Endothelial cell of umbilical vein (primary cell): ENCODE measurements at regions of chr2 and their contacts with region 1.

Region 1: GRCh38 chr2:27628767-27629709 is at the starts of genes CCDC121 and GPN1:
- DNase-seq: peak; percentile 93
- H3K4me3 ChIP-seq: peak within 1 kb of the TSS; percentile 98
- H3K27ac ChIP-seq: peak within 1 kb of the TSS; percentile 69
- H3K4me1 ChIP-seq: peaks cover 27% of the 10 kb centered on the region
- H3K27me3 ChIP-seq: no peaks in the 10 kb centered on the region
- CTCF ChIP-seq: no peak
- POLR2A ChIP-seq: peak; percentile 96
- total RNA-seq, gene CCDC121: 1.7 and 3.3 TPM in 2 replicates
- total RNA-seq, gene GPN1: 41.5 and 45.5 TPM in 2 replicates

Region 2: DNA sequence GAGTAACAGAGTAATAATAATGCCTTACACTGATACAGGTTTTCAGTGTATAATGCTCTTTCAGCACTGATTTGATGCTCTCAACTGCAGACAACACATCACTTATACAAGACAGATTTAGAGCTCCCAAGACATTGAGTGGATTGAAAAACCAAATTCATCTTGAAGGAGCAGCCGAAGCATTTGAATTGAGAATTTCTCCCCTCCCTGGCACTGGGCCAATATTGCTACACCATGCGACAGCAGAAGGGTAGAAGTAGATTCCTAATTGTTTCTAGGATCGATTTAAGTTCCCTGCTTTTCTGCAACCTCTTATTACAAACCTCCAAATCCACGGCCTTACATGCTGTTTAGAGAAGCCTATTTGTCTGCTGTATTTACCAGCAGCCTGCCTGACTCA is 827.7 kb before region 1 on chr2:
- CTCF ChIA-PET with region 1: no interaction called
- POLR2A ChIA-PET with region 1: no interaction called
- dilution Hi-C with region 1: no loop called
- intact Hi-C with region 1: no loop called
- DNase-seq: no peak
- H3K4me3 ChIP-seq: no peak overlapping the region
- H3K27ac ChIP-seq: no peak overlapping the region
- H3K4me1 ChIP-seq: no peaks in the 10 kb centered on the region
- H3K27me3 ChIP-seq: no peaks in the 10 kb centered on the region
- CTCF ChIP-seq: no peak
- POLR2A ChIP-seq: no peak

Region 3: DNA sequence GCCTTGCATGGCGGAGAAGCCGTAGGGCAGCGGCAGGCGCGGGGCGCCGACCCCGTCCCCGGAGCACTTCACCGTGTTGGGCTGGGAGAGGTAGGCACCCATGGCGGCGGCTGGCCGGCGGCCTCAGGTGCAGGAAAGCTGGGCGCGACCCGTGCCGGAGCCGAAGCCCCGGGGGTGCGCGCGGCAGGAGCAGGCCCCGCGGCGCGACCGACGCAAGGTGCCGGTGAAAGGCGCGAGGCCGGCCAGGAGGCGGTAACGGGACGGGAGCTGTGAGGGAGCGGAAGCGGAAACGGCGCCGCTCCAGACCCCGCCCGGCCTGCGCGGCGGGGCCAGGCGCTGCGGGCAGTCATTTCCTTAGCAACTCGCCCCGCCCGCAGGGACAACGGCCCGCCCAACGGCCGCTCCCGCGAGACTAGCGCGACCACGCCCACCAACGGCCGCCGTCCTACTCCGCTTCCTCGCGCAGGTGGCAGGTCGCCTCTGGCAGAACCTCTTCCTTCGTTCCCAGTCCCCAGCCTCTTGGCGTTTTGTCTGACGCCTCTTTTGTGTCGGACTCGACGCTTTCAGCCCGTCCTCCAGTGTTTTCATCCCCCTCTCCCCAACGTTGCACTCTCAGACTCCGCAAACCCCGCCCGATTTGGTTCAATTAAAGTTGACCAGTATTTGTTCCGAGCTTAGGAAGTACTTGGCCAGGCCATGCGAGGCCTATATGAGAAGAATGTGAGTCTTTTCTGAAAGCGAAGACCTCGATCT is 219.5 kb before region 1 on chr2 and contains the start of gene PPM1G:
- CTCF ChIA-PET with region 1: no interaction called
- POLR2A ChIA-PET with region 1: no interaction called
- dilution Hi-C with region 1: no loop called
- intact Hi-C with region 1: loop called (anchors 1 kb)
- DNase-seq: peak; percentile 97
- H3K4me3 ChIP-seq: peak within 1 kb of the TSS; percentile 71 to 90 (median 84)
- H3K27ac ChIP-seq: peak within 1 kb of the TSS; percentile 73
- H3K4me1 ChIP-seq: peaks cover 20% of the 10 kb centered on the region
- H3K27me3 ChIP-seq: peaks cover 1 to 5% of the 10 kb centered on the region in 2 experiments
- CTCF ChIP-seq: no peak
- POLR2A ChIP-seq: peak; percentile 98
- total RNA-seq, gene PPM1G: 131 and 135 TPM in 2 replicates

Region 4: GRCh38 chr2:27441958-27442919 is 186.8 kb before region 1 on chr2 and contains the start of gene KRTCAP3:
- CTCF ChIA-PET with region 1: no interaction called
- POLR2A ChIA-PET with region 1: no interaction called
- dilution Hi-C with region 1: no loop called
- intact Hi-C with region 1: no loop called
- DNase-seq: no peak
- H3K4me3 ChIP-seq: no peak within 1 kb of the TSS
- H3K27ac ChIP-seq: no peak within 1 kb of the TSS
- H3K4me1 ChIP-seq: no peaks in the 10 kb centered on the region
- H3K27me3 ChIP-seq: no peaks in the 10 kb centered on the region
- CTCF ChIP-seq: no peak
- POLR2A ChIP-seq: no peak
- total RNA-seq, gene KRTCAP3: 4.0 and 4.6 TPM in 2 replicates

Region 5: GRCh38 chr2:27489498-27490397 is 139.3 kb before region 1 on chr2 and contains the start of gene IFT172:
- CTCF ChIA-PET with region 1: no interaction called
- POLR2A ChIA-PET with region 1: no interaction called
- dilution Hi-C with region 1: no loop called
- intact Hi-C with region 1: loop called (anchors 2 kb)
- DNase-seq: peak; percentile 99
- H3K4me3 ChIP-seq: peak within 1 kb of the TSS; percentile 9 to 66 (median 56)
- H3K27ac ChIP-seq: peak within 1 kb of the TSS; percentile 0
- H3K4me1 ChIP-seq: peaks cover 15% of the 10 kb centered on the region
- H3K27me3 ChIP-seq: no peaks in the 10 kb centered on the region
- CTCF ChIP-seq: no peak
- POLR2A ChIP-seq: peak; percentile 83
- total RNA-seq, gene IFT172: 34.1 and 35.6 TPM in 2 replicates

Region 6: DNA sequence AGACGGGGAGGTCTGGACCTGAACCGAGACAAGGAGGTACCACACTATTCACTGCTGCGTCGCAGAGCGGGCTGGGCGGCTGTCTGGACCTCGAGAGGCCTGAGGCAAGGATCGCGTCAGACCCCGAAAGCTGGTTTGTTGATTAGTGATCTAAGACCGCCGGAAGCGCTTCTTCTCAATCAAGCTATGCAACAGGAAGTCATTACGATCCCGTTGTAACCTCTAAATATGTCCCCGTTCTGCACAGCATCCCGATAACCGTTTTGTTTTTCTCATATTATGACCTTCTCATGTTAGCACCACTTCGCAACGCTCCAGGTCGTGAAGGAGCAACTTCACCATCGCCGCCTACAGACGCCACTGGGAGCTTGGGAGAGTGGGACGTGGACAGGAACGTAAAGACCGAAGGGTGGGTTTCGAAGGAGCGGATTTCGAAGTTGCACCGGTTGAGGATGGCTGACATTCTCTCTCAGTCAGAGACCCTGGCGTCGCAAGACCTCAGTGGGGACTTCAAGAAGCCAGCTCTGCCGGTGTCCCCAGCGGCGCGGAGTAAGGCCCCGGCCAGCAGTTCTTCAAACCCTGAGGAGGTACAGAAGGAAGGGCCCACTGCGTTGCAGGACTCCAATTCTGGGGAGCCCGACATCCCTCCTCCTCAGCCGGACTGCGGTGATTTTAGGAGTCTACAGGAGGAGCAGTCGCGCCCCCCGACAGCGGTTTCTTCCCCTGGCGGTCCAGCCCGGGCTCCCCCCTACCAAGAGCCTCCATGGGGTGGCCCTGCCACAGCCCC is 34.6 kb after region 1 on chr2 and contains the starts of genes SLC4A1AP and SUPT7L:
- CTCF ChIA-PET with region 1: no interaction called
- POLR2A ChIA-PET with region 1: no interaction called
- dilution Hi-C with region 1: no loop called
- intact Hi-C with region 1: loop called (anchors 1 kb)
- DNase-seq: peak; percentile 92
- H3K4me3 ChIP-seq: peak within 1 kb of the TSS; percentile 71 to 98 (median 84)
- H3K27ac ChIP-seq: peak within 1 kb of the TSS; percentile 73
- H3K4me1 ChIP-seq: peaks cover 37% of the 10 kb centered on the region
- H3K27me3 ChIP-seq: no peaks in the 10 kb centered on the region
- CTCF ChIP-seq: no peak
- POLR2A ChIP-seq: peak; percentile 67
- total RNA-seq, gene SLC4A1AP: 26.2 and 28.4 TPM in 2 replicates
- total RNA-seq, gene SUPT7L: 30.2 and 30.3 TPM in 2 replicates